Ascending aorta (tissue), 2 donors: ENCODE measurements at regions of chr4 and their contacts with region 1.

Region 1: DNA sequence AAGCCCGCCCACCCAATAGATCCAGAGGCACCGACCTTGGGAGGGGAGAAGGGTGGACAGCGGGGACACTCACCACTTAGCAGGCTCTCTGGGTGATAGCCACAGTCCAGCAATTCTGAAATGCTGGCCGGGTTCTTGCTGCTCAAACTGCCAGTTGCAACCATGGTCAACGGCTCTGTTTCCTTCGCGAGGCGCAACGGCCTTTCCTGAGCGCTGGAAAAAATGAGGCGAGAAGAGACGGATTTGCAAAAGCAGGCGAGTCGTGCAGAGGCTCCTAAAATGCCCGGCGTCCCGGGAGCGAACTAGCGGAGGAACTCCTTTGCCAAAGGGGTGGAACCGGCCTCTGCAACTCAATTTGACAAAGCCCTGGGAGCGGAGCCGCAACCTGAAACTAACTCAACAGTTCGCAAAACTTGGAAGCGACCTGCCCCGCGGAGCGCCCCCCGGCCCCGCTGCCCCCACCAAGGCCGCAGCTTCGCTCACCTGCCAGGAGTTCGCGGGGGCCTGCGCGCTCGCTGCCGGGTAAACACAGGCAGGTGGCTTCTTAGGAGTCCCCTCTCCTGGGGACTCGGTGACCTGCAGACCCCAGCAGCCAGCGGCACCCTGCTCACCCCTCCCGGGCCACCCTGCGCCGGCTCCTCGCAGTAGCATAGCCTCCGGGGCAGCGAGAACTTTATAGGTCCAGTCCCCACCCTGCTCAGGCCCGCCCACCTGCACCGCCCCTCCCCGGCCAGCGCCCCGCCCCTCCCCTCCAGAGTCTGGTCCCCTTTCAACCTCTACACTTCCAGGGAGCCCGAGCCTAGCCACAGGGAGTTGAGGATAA is at the start of gene DDIT4L:
- DNase-seq: peak in 1 of 2 donors; percentile 65
- H3K4me3 ChIP-seq: peak within 1 kb of the TSS; percentile 71 to 86
- H3K27ac ChIP-seq: peak within 1 kb of the TSS; percentile 19 to 29
- H3K4me1 ChIP-seq: peaks cover 0 to 5% of the 10 kb centered on the region in 2 donors
- H3K27me3 ChIP-seq: no peaks in the 10 kb centered on the region
- CTCF ChIP-seq: no peak
- total RNA-seq, gene DDIT4L: 4.8 TPM

Region 2: DNA sequence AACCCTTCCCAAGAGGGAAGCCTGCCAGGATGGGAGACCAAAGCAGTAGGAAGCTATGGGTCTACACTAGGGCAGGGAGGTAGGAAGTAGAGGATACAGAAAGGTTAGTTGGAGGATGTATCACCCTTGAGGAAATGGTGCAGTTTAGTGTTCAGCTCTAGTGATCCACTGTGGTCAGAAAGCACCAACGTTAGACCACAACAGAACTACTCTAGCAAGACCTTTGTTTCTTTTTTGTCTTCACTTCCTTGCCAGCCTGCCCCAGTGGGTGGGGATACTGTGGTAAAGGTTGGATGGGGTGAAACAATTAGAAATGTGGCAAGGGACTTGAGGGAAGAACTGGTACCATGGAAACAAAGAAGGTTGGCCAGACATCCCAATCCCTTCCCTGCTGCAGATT is 83.0 kb before region 1 on chr4:
- intact Hi-C with region 1: loop called (anchors 5 kb)
- DNase-seq: no peak
- H3K4me3 ChIP-seq: no peak overlapping the region
- H3K27ac ChIP-seq: no peak overlapping the region
- H3K4me1 ChIP-seq: no peaks in the 10 kb centered on the region
- H3K27me3 ChIP-seq: no peaks in the 10 kb centered on the region
- CTCF ChIP-seq: no peak

Region 3: GRCh38 chr4:100147198-100147597 is 42.8 kb before region 1 on chr4:
- intact Hi-C with region 1: no loop called
- DNase-seq: no peak
- H3K4me3 ChIP-seq: no peak overlapping the region
- H3K27ac ChIP-seq: no peak overlapping the region
- H3K4me1 ChIP-seq: no peaks in the 10 kb centered on the region
- H3K27me3 ChIP-seq: no peaks in the 10 kb centered on the region
- CTCF ChIP-seq: no peak